MCF 10A (cell line): ENCODE measurements at regions of chr1 and their contacts with region 1.

Region 1: DNA sequence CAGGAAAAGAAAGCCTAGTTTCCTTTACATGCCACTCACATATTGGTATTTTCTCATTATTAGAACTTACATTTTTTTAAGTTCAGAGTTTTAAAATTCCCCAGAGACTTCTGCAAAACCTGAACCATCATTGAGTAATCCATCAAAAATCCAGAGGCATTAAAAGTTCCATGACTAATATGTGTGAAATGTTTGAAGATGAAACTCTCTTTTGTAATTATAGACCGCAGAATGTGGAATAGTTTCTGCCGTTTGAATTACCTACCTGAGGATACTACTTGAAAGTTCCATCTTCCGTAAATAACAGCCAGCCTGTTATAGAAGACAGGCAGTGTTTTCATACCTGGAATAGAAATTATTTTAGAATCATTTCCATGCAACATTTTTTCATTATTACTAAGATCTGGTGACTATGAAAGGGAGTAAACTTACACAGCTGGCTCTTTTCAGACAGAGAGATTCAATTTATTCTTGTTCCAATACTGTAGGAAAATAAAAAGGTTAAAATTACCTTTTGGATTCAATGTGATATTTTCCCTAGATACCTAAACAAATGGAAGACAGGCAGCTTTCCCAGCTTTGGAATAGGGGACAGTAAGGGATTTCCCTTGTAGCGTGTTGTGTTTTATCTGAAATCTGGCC is 131.4 kb downstream of the ST6GALNAC5 start:
- DNase-seq: peak; percentile 83
- H3K4me3 Mint-ChIP-seq: peak overlapping the region; percentile 44
- H3K27ac Mint-ChIP-seq: peak overlapping the region; percentile 96
- H3K4me1 Mint-ChIP-seq: peaks cover 15% of the 10 kb centered on the region
- H3K27me3 Mint-ChIP-seq: no peaks in the 10 kb centered on the region
- CTCF ChIP-seq: no peak

Region 2: GRCh38 chr1:76782809-76783208 is 215.9 kb before region 1 on chr1:
- CTCF ChIA-PET with region 1: no interaction called
- POLR2A ChIA-PET with region 1: no interaction called
- intact Hi-C with region 1: no loop called
- DNase-seq: peak; percentile 80
- H3K4me3 Mint-ChIP-seq: no peak overlapping the region
- H3K27ac Mint-ChIP-seq: no peak overlapping the region
- H3K4me1 Mint-ChIP-seq: no peaks in the 10 kb centered on the region
- H3K27me3 Mint-ChIP-seq: no peaks in the 10 kb centered on the region
- CTCF ChIP-seq: no peak

Region 3: DNA sequence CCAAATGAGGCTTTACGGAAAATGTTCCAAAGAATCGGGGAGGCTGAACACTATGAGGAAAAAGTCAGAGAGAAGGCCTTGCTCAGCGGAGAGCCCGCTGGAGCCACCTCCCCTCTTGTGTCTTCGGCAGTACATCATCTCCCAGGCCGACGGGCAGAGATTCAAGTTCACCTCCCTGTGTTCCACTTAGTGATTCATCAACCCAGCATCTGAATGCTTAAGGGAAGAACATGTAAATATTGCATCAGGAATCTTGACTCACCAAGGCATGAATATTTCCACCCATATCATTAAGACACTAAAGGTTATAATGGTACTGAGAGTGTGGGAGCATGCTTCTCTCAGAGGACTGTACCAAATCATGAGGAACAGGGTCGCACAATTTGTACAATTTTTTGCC is 41.0 kb after region 1 on chr1:
- CTCF ChIA-PET with region 1: no interaction called
- POLR2A ChIA-PET with region 1: interaction called, 3 read pairs
- intact Hi-C with region 1: loop called (anchors 1 kb)
- DNase-seq: peak; percentile 98
- H3K4me3 Mint-ChIP-seq: peak overlapping the region; percentile 21
- H3K27ac Mint-ChIP-seq: peak overlapping the region; percentile 89
- H3K4me1 Mint-ChIP-seq: peaks cover 41% of the 10 kb centered on the region
- H3K27me3 Mint-ChIP-seq: no peaks in the 10 kb centered on the region
- CTCF ChIP-seq: no peak

Region 4: DNA sequence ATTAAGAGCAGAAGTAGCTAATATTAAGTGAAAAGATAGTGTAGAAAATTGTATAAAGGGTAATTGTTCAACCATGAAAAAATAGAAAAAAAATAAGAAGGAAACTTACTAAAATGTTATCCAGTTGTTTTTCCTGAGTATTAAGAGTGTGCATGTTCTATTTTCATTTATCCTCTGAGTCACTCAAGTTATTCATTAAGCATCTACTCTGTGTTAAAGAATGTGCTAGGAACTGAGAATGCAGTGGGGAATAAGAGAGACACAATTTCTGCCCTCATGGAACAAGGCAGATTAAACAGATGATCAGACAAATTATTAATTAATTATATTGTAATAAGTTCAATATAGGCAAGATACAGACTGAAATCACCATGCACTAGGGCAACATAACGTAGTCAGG is 231.3 kb after region 1 on chr1:
- CTCF ChIA-PET with region 1: no interaction called
- POLR2A ChIA-PET with region 1: no interaction called
- intact Hi-C with region 1: no loop called
- DNase-seq: no peak
- H3K4me3 Mint-ChIP-seq: no peak overlapping the region
- H3K27ac Mint-ChIP-seq: no peak overlapping the region
- H3K4me1 Mint-ChIP-seq: no peaks in the 10 kb centered on the region
- H3K27me3 Mint-ChIP-seq: no peaks in the 10 kb centered on the region
- CTCF ChIP-seq: no peak